Naive thymus-derived CD4-positive, alpha-beta T cell (primary cell): ENCODE measurements at regions of chr6 and their contacts with region 1.

Region 1: DNA sequence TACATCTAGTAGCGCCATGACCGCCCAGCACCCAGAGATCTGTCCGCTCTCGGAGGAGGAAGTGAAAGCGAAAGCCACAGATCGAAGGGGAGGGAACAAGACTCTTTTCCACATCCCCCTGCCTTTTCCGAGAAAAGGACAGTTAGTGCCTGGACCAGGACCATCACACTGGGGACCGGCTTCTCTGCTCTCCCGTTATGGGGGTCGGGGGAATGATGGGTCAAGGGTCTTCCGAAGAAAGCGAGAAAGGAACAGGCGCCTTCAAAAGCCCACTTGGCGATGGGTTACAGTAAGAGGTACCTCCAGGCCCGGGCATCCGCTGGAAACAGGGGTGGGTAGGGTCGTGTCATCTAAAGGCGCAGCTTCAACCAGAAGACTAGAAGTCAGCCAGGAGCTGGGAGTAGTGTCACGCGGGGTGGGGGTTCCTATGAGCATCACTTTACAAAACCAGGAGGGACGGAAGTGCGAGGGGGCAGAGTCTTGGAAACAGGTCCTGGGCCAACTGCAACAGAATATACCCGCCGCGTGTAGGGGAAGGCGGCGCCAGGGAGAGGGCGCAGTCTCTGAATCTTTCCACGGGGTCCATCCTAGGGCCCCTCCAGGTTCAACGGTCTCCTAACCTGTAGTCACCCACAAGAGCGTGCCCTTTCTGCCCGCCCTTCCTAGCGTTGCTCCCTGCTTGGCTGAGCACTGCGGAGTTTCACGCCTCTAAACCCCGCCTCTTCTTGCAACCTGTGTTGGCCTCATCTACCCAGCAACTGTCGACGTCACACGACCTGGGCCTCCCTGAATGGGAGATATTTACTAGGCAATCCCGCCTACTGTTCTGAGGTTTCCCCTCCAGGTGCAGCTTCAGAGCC is at the start of gene PSMB8:
- DNase-seq: peak; percentile 92 to 99 (median 97)
- ATAC-seq: peak; percentile 90
- H3K4me3 ChIP-seq: peak within 1 kb of the TSS; percentile 97
- H3K4me3 Mint-ChIP-seq: peak within 1 kb of the TSS; percentile 92 to 99 (median 98)
- H3K27ac ChIP-seq: peak within 1 kb of the TSS; percentile 97
- H3K27ac Mint-ChIP-seq: peak within 1 kb of the TSS; percentile 99 to 100 (median 100)
- H3K4me1 ChIP-seq: peaks cover 71 to 72% of the 10 kb centered on the region in 2 donors
- H3K4me1 Mint-ChIP-seq: peaks cover 66 to 83% (median 79%) of the 10 kb centered on the region in 7 donors
- H3K27me3 ChIP-seq: no peaks in the 10 kb centered on the region
- H3K27me3 Mint-ChIP-seq: no peaks in the 10 kb centered on the region
- total RNA-seq, gene PSMB8: 111 to 419 (median 115) TPM

Region 2: DNA sequence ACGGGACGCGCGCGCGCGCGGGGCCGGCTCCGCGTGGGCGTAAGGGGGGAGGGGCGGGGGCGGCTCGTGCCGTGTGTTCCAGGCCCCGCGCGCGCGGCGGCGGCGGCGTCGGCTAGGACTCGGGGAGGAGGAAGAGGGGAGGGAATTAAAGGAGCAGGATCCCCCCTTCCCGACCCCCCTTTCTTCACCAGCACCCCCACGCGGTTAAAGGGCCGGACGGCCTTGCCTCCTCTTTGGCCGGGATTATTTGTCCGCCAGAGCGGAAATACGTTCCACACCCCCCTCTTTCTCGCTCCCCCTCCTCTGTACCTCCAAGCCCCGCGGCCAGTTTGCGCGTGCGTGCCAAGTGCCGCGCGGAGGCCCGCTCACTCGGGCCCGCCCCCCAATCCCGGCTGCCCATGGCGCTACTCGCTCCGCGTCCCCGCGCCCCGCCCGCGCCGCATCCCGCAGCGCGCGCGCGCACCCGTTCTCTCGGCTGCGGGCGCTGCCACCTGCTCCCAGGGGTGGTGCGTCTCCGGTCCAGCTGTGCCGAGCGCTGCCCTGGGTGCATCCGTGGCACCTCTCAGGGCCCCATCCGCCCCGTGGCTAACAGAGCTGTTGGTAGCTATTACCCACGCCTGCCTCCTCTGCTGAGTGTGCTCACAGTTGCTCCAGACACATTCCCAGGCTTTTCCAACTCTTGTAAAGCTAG is 942.1 kb before region 1 on chr6 and contains the start of gene ZBTB12:
- CTCF ChIA-PET with region 1: no interaction called
- POLR2A ChIA-PET with region 1: no interaction called
- intact Hi-C with region 1: loop called in 1 of 2 experiments (anchors 10 kb)
- DNase-seq: peak; percentile 76 to 90 (median 84)
- ATAC-seq: peak; percentile 76
- H3K4me3 ChIP-seq: peak within 1 kb of the TSS; percentile 80
- H3K4me3 Mint-ChIP-seq: peak within 1 kb of the TSS; percentile 81 to 96 (median 88)
- H3K27ac ChIP-seq: peak within 1 kb of the TSS; percentile 83
- H3K27ac Mint-ChIP-seq: peak within 1 kb of the TSS; percentile 75 to 94 (median 86)
- H3K4me1 ChIP-seq: peaks cover 12 to 16% of the 10 kb centered on the region in 2 donors
- H3K4me1 Mint-ChIP-seq: peaks cover 18 to 34% (median 32%) of the 10 kb centered on the region in 7 donors
- H3K27me3 ChIP-seq: no peaks in the 10 kb centered on the region
- H3K27me3 Mint-ChIP-seq: peaks cover 0 to 11% (median 0%) of the 10 kb centered on the region in 5 donors
- total RNA-seq, gene ZBTB12: 0.77 to 4.5 (median 2.5) TPM

Region 3: GRCh38 chr6:32940656-32941213 is 96.5 kb after region 1 on chr6 and contains the start of gene HLA-DMB:
- CTCF ChIA-PET with region 1: interaction called, 6 read pairs
- POLR2A ChIA-PET with region 1: interaction called, 21 read pairs
- intact Hi-C with region 1: no loop called
- DNase-seq: peak in 7 of 9 donors; percentile 64 to 80 (median 74)
- ATAC-seq: peak; percentile 86
- H3K4me3 ChIP-seq: peak within 1 kb of the TSS; percentile 66
- H3K4me3 Mint-ChIP-seq: peak within 1 kb of the TSS; percentile 85 to 97 (median 94)
- H3K27ac ChIP-seq: peak within 1 kb of the TSS; percentile 75
- H3K27ac Mint-ChIP-seq: peak within 1 kb of the TSS; percentile 95 to 98 (median 96)
- H3K4me1 ChIP-seq: peaks cover 50 to 55% of the 10 kb centered on the region in 2 donors
- H3K4me1 Mint-ChIP-seq: peaks cover 55 to 67% (median 62%) of the 10 kb centered on the region in 7 donors
- H3K27me3 ChIP-seq: no peaks in the 10 kb centered on the region
- H3K27me3 Mint-ChIP-seq: peaks cover 0 to 7% (median 0%) of the 10 kb centered on the region in 5 donors
- total RNA-seq, gene HLA-DMB: 7.8 to 82.5 (median 9.1) TPM

Region 4: DNA sequence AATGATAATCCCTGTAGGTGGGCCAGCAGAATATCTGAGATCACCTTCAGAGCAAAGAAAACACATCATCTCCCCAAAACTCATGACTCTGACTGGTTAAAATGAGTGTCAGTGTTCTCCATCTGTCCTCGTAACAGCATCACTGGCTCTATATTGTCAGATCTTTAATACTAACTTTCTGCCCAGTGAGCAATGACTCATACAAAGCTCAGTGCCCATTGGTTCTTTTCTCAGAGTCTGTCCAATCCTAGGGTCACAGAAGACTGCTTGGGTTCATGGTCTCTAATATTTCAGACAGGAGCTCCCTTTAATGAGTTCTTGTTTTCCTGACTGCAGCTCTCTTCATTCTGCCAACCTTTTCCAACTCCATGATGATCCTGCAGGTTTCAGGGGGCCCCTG is 267.9 kb after region 1 on chr6:
- CTCF ChIA-PET with region 1: no interaction called
- POLR2A ChIA-PET with region 1: no interaction called
- intact Hi-C with region 1: no loop called
- DNase-seq: peak in 7 of 9 donors; percentile 19 to 55 (median 31)
- ATAC-seq: peak; percentile 97
- H3K4me3 ChIP-seq: no peak overlapping the region
- H3K4me3 Mint-ChIP-seq: no peak overlapping the region
- H3K27ac ChIP-seq: no peak overlapping the region
- H3K27ac Mint-ChIP-seq: no peak overlapping the region
- H3K4me1 ChIP-seq: peaks cover 0 to 4% of the 10 kb centered on the region in 2 donors
- H3K4me1 Mint-ChIP-seq: peaks cover 0 to 10% (median 7%) of the 10 kb centered on the region in 7 donors
- H3K27me3 ChIP-seq: peaks cover 0 to 6% of the 10 kb centered on the region in 2 donors
- H3K27me3 Mint-ChIP-seq: peaks cover 68 to 85% (median 80%) of the 10 kb centered on the region in 5 donors

Region 5: DNA sequence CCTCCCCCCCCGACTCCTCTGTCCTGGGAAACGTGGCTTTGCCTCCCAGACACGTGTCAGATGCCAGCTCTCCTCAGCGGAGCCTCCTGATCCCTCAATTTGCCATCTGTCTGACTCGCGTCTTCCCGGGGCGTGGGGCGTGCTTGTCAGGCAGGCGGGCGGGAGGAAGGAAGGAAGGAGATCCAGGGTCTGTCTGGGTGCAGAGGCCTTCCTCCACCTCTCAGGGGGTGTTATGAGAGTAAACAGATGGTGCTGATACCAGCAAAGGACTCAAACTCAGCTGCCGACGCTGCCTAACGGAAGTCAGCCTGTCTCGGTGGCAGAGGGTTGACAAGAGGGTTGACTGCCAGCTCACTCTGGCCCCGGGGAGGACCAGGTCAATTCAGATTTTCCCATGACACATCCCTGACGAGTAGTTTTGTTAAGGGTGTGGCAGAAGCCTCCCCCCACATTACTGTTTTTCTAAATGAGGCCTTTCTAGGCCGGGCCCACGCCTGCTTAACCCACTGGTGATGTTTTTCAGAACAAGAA is 850.3 kb after region 1 on chr6:
- CTCF ChIA-PET with region 1: no interaction called
- POLR2A ChIA-PET with region 1: no interaction called
- intact Hi-C with region 1: no loop called
- DNase-seq: peak; percentile 28 to 70 (median 64)
- ATAC-seq: peak; percentile 68
- H3K4me3 ChIP-seq: no peak overlapping the region
- H3K4me3 Mint-ChIP-seq: peak overlapping the region; percentile 66 to 86 (median 78)
- H3K27ac ChIP-seq: peak overlapping the region; percentile 80
- H3K27ac Mint-ChIP-seq: peak overlapping the region; percentile 88 to 100 (median 96)
- H3K4me1 ChIP-seq: peaks cover 58 to 74% of the 10 kb centered on the region in 2 donors
- H3K4me1 Mint-ChIP-seq: peaks cover 33 to 85% (median 74%) of the 10 kb centered on the region in 7 donors
- H3K27me3 ChIP-seq: no peaks in the 10 kb centered on the region
- H3K27me3 Mint-ChIP-seq: no peaks in the 10 kb centered on the region